ENCODE measurements at regions of chr7 and their contacts with region 1.

Region 1: GRCh38 chr7:51067757-51068156 is 248.9 kb downstream of the COBL start:
- DNase-seq: no peak
- H3K4me3 ChIP-seq: no peak overlapping the region
- H3K27ac ChIP-seq: no peak overlapping the region
- H3K4me1 ChIP-seq: peaks cover 0 to 14% (median 2%) of the 10 kb centered on the region in 6 donors
- H3K27me3 ChIP-seq: no peaks in the 10 kb centered on the region
- CTCF ChIP-seq: peak in 10 of 11 experiments; percentile 17 to 71 (median 54)
- POLR2A ChIP-seq: no peak

Region 2: DNA sequence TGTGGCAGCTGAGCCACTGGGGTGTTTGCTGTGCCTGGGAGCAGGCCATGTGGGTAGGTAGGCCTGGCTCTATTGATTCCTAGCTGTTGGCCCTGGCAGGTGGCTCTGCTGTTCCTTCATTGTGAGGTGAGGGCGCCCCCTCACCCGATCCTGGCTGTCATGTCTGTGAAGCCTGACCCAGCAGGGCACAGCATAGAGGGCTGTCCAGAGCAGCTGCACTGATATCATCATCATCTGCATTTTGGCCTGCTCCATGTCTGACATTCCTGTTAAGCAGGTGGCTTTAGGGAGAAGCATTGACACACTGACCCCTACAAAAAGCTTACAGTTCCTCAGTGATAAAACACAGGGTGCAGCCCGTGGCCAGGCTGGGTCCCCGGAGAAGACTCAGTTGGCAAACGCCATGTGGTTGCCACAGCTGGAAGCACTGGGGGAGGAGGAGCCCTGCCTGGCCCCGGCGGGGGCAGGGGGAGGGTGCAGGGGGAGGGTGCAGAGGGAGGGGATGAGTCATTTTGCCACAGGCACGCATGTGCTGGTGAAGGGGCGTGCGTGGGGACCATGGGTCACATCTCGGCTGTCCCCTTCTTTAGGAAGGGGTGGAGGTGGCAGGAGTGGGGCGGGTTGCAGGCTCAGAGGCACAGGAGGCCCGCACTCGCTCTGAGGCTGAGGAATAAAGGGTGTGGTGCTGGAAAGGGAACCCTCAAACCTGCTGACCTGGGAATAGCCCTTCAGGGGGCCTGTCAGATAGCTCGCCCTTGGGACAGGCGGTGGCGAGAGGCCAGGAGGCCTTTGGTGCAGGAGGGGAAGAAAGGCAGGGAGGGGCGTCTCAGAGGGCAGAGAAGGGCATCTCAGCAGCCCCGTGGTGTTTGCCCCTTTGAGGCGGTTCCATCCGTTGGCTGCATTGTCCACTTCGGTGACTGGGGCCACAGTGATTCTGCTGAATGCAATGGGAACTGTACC is 731.7 kb before region 1 on chr7:
- intact Hi-C with region 1: no loop called
- DNase-seq: peak; percentile 91
- H3K4me3 ChIP-seq: peak overlapping the region in 1 of 8 donors; percentile 22
- H3K27ac ChIP-seq: peak overlapping the region; percentile 55 to 92 (median 84)
- H3K4me1 ChIP-seq: peaks cover 71 to 100% (median 98%) of the 10 kb centered on the region in 6 donors
- H3K27me3 ChIP-seq: no peaks in the 10 kb centered on the region
- CTCF ChIP-seq: no peak
- POLR2A ChIP-seq: no peak

Region 3: DNA sequence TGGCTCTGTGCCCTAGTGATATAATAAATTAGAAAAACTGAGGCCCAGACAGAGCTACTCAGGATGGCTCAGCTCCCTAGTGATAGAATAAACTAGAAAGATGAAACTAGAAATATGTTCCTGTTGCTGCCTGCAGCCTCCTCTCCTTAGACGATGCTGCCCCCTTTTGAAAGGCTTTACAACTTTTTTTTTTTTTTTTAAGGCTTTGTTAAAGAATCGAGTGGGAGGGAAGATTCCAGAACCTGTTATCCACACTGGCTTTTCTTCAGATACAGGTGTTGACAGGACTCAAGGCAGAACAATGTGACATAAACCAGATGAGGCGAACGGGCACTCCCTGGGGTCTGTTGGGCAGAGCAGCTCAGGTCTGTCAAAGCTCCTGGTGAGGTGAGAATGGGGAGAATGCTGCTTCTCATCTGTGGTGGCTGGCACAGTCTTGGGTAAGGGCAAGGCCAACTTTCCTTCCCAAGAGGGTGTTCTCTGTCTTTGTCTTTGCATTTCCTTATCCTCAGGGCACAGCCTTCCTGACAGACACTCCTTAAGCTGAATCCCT is 73.8 kb after region 1 on chr7:
- intact Hi-C with region 1: loop called (anchors 10 kb)
- DNase-seq: no peak
- H3K4me3 ChIP-seq: no peak overlapping the region
- H3K27ac ChIP-seq: no peak overlapping the region
- H3K4me1 ChIP-seq: peaks cover 0 to 21% (median 6%) of the 10 kb centered on the region in 6 donors
- H3K27me3 ChIP-seq: no peaks in the 10 kb centered on the region
- CTCF ChIP-seq: peak in 5 of 11 experiments; percentile 7 to 64 (median 32)
- POLR2A ChIP-seq: no peak

Region 4: GRCh38 chr7:51785171-51785570 is 717.4 kb after region 1 on chr7:
- intact Hi-C with region 1: no loop called
- DNase-seq: no peak
- H3K4me3 ChIP-seq: no peak overlapping the region
- H3K27ac ChIP-seq: no peak overlapping the region
- H3K4me1 ChIP-seq: no peaks in the 10 kb centered on the region
- H3K27me3 ChIP-seq: no peaks in the 10 kb centered on the region
- CTCF ChIP-seq: no peak
- POLR2A ChIP-seq: no peak

Measured in spleen (tissue), 13 donors.